ENCODE measurements at regions of chr14 and their contacts with region 1.

Region 1: GRCh38 chr14:30354439-30354838 is 204.5 kb upstream of the G2E3 start:
- DNase-seq: no peak
- H3K4me3 Mint-ChIP-seq: no peak overlapping the region
- H3K27ac Mint-ChIP-seq: no peak overlapping the region
- H3K4me1 Mint-ChIP-seq: peaks cover 18% of the 10 kb centered on the region
- H3K27me3 Mint-ChIP-seq: no peaks in the 10 kb centered on the region

Region 2: GRCh38 chr14:30291216-30291615 is 63.2 kb before region 1 on chr14:
- CTCF ChIA-PET with region 1: no interaction called
- intact Hi-C with region 1: loop called (anchors 5 kb)
- DNase-seq: no peak
- H3K4me3 Mint-ChIP-seq: no peak overlapping the region
- H3K27ac Mint-ChIP-seq: no peak overlapping the region
- H3K4me1 Mint-ChIP-seq: peaks cover 4% of the 10 kb centered on the region
- H3K27me3 Mint-ChIP-seq: peaks cover 13% of the 10 kb centered on the region

Measured in activated naive CD4-positive, alpha-beta T cell treated with anti-CD3 and anti-CD28 coated beads for 36 hours (primary cell).